WTC11 (cell line): ENCODE measurements at regions of chr15 and their contacts with region 1.

Region 1: DNA sequence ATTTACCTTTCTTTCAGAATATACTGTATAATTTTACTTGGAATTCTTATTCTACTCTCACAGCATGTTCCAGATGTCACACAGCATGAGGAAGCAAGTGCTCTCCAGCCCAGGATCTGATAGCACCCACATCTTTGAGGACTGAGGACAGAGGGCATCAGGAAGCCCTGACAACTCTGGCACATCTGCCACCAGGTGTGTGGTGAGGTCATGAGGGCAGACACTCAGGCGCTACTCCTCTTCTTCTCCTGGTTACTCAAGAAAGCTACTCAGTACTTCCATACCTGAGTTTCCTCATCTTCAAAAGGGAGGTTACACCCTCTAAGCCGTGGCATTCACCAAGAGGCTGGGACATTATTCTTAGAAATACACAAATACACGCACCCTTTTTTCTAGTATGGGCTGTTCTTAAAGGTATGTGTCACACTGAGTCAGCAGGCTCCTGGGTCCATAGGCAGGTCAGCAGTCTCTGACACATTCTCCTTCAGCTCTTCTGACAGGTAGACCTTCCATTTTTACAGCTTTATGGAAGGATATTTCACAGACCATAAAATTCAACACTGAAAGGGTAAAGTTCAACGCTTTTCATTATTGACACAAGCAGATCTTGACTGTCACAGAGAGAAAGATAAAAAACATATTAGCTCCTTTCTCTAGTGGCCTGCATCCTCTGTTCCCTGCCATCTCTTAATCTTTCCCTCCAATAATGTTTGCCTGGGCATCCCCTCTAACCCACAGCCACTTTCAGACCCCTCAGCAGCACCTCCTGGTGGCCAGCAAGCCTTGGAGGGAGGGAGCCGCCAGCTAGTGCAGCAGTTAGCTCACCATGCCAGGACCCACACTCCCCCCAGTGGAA is 103.2 kb upstream of the TJP1 start:
- DNase-seq: peak; percentile 91
- ATAC-seq: peak; percentile 72
- H3K4me3 Mint-ChIP-seq: no peak overlapping the region
- H3K27ac Mint-ChIP-seq: peak overlapping the region; percentile 96; the same call in 1 of the 2 replicates
- H3K4me1 Mint-ChIP-seq: peaks cover 39% of the 10 kb centered on the region
- H3K27me3 Mint-ChIP-seq: no peaks in the 10 kb centered on the region
- CTCF ChIP-seq: peak; percentile 74

Region 2: GRCh38 chr15:29692527-29692926 is 232.9 kb before region 1 on chr15:
- CTCF ChIA-PET with region 1: interaction called, 16 read pairs
- POLR2A ChIA-PET with region 1: no interaction called
- DNase-seq: no peak
- ATAC-seq: no peak; the same call in 1 of the 2 replicates
- H3K4me3 Mint-ChIP-seq: no peak overlapping the region
- H3K27ac Mint-ChIP-seq: no peak overlapping the region
- H3K4me1 Mint-ChIP-seq: peaks cover 7% of the 10 kb centered on the region
- H3K27me3 Mint-ChIP-seq: no peaks in the 10 kb centered on the region
- CTCF ChIP-seq: no peak

Region 3: DNA sequence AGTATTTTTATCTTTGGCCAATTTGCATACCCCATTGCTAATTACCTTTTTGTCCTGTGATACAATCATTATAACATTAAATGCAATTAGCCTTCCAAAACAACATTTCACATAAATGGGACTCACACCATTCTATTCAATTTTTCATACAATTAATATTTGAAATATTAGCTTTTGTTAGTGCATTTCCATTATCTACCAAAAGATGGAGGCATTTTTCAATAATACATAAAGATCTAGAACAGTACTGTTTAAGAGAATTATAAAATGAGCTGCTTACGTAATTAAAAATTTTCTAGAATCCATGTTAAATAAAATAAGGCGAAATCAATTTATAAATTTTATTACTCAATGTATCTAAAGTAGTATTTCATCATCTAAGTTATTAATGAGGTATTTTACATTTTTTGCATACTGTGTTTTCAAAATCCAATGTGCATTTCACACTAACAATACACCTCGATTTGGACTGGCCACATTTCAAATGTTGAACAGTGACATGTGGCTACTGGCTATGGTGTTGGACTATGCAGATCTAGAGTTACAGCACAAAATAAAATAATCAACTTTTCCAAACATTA is 177.5 kb before region 1 on chr15:
- CTCF ChIA-PET with region 1: interaction called, 26 read pairs
- POLR2A ChIA-PET with region 1: no interaction called
- DNase-seq: no peak
- ATAC-seq: no peak
- H3K4me3 Mint-ChIP-seq: no peak overlapping the region
- H3K27ac Mint-ChIP-seq: no peak overlapping the region
- H3K4me1 Mint-ChIP-seq: peaks cover 3% of the 10 kb centered on the region
- H3K27me3 Mint-ChIP-seq: no peaks in the 10 kb centered on the region
- CTCF ChIP-seq: no peak

Region 4: GRCh38 chr15:29844284-29844913 is 81.1 kb before region 1 on chr15:
- CTCF ChIA-PET with region 1: interaction called, 13 read pairs
- POLR2A ChIA-PET with region 1: no interaction called
- DNase-seq: no peak
- ATAC-seq: no peak
- H3K4me3 Mint-ChIP-seq: no peak overlapping the region
- H3K27ac Mint-ChIP-seq: no peak overlapping the region
- H3K4me1 Mint-ChIP-seq: peaks cover 27% of the 10 kb centered on the region
- H3K27me3 Mint-ChIP-seq: no peaks in the 10 kb centered on the region
- CTCF ChIP-seq: no peak

Region 5: GRCh38 chr15:29880341-29880740 is 45.1 kb before region 1 on chr15:
- CTCF ChIA-PET with region 1: interaction called, 61 read pairs
- POLR2A ChIA-PET with region 1: no interaction called
- DNase-seq: no peak
- ATAC-seq: no peak
- H3K4me3 Mint-ChIP-seq: no peak overlapping the region
- H3K27ac Mint-ChIP-seq: no peak overlapping the region
- H3K4me1 Mint-ChIP-seq: peaks cover 23% of the 10 kb centered on the region
- H3K27me3 Mint-ChIP-seq: no peaks in the 10 kb centered on the region
- CTCF ChIP-seq: no peak

Region 6: DNA sequence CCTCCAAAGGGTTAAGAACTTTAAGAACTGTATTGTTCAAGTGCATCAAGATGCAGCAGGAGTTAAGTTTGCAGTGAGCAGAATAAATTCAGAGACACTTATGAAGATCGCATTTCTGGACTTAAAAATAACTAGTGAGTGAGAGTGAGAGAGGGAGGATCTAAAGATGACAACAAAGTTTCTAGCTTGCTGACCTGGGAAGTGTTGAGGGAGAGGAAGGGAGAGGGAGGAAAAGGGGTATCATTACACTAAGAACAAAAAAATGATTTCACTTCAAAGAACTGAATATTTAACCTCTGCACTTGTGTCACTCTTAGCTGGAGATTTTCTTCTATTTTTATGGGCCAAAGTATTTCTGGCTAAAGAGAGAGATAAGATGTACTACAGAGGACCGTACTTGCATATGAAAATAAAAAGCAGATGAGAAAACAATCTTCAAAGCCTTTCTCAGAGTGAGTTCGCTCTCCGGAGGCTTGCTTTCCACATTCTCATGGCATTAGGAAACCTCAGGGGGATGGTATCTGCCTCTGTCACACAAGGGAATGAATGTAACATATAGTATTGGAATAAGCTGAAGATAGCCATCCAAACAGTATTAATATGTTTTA is 11.8 kb before region 1 on chr15:
- CTCF ChIA-PET with region 1: interaction called, 17 read pairs
- POLR2A ChIA-PET with region 1: no interaction called
- DNase-seq: no peak
- ATAC-seq: no peak
- H3K4me3 Mint-ChIP-seq: no peak overlapping the region
- H3K27ac Mint-ChIP-seq: 0 out of 2 replicates have a peak overlapping the region, but pooled peaks have one; percentile 46
- H3K4me1 Mint-ChIP-seq: peaks cover 23% of the 10 kb centered on the region
- H3K27me3 Mint-ChIP-seq: no peaks in the 10 kb centered on the region
- CTCF ChIP-seq: no peak

Region 7: GRCh38 chr15:30073915-30074314 is 148.5 kb after region 1 on chr15:
- CTCF ChIA-PET with region 1: interaction called, 29 read pairs
- POLR2A ChIA-PET with region 1: no interaction called
- DNase-seq: no peak
- ATAC-seq: no peak
- H3K4me3 Mint-ChIP-seq: no peak overlapping the region
- H3K27ac Mint-ChIP-seq: no peak overlapping the region
- H3K4me1 Mint-ChIP-seq: peaks cover 5% of the 10 kb centered on the region
- H3K27me3 Mint-ChIP-seq: no peaks in the 10 kb centered on the region
- CTCF ChIP-seq: no peak